Naive thymus-derived CD4-positive, alpha-beta T cell (primary cell): ENCODE measurements at regions of chr2 and their contacts with region 1.

Region 1: DNA sequence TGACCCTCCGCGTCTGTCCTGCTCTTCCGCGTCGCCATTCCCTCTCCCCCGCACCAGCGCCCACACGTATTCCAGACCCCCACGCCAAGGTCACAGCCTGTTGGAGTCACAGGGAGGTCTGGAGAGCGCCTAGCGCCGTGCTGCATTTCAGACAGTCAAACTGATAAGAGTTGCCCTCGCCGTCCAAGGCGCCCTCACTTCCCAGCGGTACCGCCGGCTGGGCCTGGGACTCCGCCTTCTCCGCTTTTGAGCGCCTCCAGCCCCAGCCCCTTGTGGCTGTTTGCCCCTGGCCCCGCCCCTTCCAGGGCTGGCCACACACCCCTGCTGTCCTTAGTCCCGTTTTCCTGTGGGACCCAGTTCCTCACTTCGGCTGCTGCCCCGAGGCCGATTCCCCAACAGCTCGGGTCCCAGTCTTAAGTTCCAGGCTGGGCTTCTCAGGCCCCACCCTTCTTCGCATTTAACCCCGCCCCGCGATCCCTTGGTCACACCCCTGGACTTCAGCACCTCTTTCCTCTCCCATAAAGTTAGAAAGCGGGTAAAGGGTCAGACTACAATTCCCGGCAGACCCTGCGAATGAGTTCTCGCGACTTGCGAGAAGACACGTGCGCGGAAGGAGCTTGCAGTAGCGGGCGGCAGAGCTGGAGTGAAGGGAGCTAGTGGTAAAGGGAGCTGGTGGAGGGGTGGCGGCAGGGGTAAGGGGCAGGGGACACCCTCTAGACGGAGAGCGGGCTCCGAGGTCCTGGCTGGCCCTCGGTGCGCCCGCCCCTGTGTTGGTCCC is at the start of gene GMPPA:
- DNase-seq: peak; percentile 78 to 95 (median 90)
- ATAC-seq: peak; percentile 94
- H3K4me3 ChIP-seq: peak within 1 kb of the TSS; percentile 85
- H3K4me3 Mint-ChIP-seq: peak within 1 kb of the TSS; percentile 91 to 99 (median 96)
- H3K27ac ChIP-seq: peak within 1 kb of the TSS; percentile 79
- H3K27ac Mint-ChIP-seq: peak within 1 kb of the TSS; percentile 76 to 97 (median 86)
- H3K4me1 ChIP-seq: peaks cover 19 to 22% of the 10 kb centered on the region in 2 donors
- H3K4me1 Mint-ChIP-seq: peaks cover 26 to 42% (median 36%) of the 10 kb centered on the region in 7 donors
- H3K27me3 ChIP-seq: peaks cover 4 to 9% of the 10 kb centered on the region in 2 donors
- H3K27me3 Mint-ChIP-seq: peaks cover 28 to 47% (median 40%) of the 10 kb centered on the region in 5 donors
- total RNA-seq, gene GMPPA: 22.4 to 58.3 (median 37.2) TPM

Region 2: GRCh38 chr2:217685255-217685605 is 1813.2 kb before region 1 on chr2:
- CTCF ChIA-PET with region 1: no interaction called
- POLR2A ChIA-PET with region 1: no interaction called
- intact Hi-C with region 1: no loop called
- DNase-seq: no peak
- ATAC-seq: no peak
- H3K4me3 ChIP-seq: no peak overlapping the region
- H3K4me3 Mint-ChIP-seq: no peak overlapping the region
- H3K27ac ChIP-seq: no peak overlapping the region
- H3K27ac Mint-ChIP-seq: no peak overlapping the region
- H3K4me1 ChIP-seq: no peaks in the 10 kb centered on the region
- H3K4me1 Mint-ChIP-seq: no peaks in the 10 kb centered on the region
- H3K27me3 ChIP-seq: no peaks in the 10 kb centered on the region
- H3K27me3 Mint-ChIP-seq: peaks cover 0 to 10% (median 0%) of the 10 kb centered on the region in 5 donors

Region 3: GRCh38 chr2:218568190-218569037 is 930.1 kb before region 1 on chr2 and contains the starts of genes CNOT9 and USP37:
- CTCF ChIA-PET with region 1: no interaction called
- POLR2A ChIA-PET with region 1: no interaction called
- intact Hi-C with region 1: loop called in 1 of 2 experiments (anchors 5 kb)
- DNase-seq: peak; percentile 99 to 100 (median 100)
- ATAC-seq: peak; percentile 95
- H3K4me3 ChIP-seq: peak within 1 kb of the TSS; percentile 78
- H3K4me3 Mint-ChIP-seq: peak within 1 kb of the TSS; percentile 90 to 100 (median 98)
- H3K27ac ChIP-seq: peak within 1 kb of the TSS; percentile 96
- H3K27ac Mint-ChIP-seq: peak within 1 kb of the TSS; percentile 97 to 100 (median 99)
- H3K4me1 ChIP-seq: peaks cover 22 to 31% of the 10 kb centered on the region in 2 donors
- H3K4me1 Mint-ChIP-seq: peaks cover 45 to 73% (median 64%) of the 10 kb centered on the region in 7 donors
- H3K27me3 ChIP-seq: no peaks in the 10 kb centered on the region
- H3K27me3 Mint-ChIP-seq: no peaks in the 10 kb centered on the region
- total RNA-seq, gene CNOT9: 44.7 to 99.6 (median 53.8) TPM
- total RNA-seq, gene USP37: 16.6 to 36.3 (median 28.1) TPM

Region 4: GRCh38 chr2:219206442-219207253 is 291.8 kb before region 1 on chr2 and contains the start of gene ZFAND2B:
- CTCF ChIA-PET with region 1: no interaction called
- POLR2A ChIA-PET with region 1: interaction called, 3 read pairs
- intact Hi-C with region 1: loop called (anchors 2 to 5 kb)
- DNase-seq: peak; percentile 92 to 98 (median 96)
- ATAC-seq: peak; percentile 96
- H3K4me3 ChIP-seq: peak within 1 kb of the TSS; percentile 98
- H3K4me3 Mint-ChIP-seq: peak within 1 kb of the TSS; percentile 77 to 98 (median 94)
- H3K27ac ChIP-seq: peak within 1 kb of the TSS; percentile 92
- H3K27ac Mint-ChIP-seq: peak within 1 kb of the TSS; percentile 96 to 99 (median 97)
- H3K4me1 ChIP-seq: peaks cover 20 to 28% of the 10 kb centered on the region in 2 donors
- H3K4me1 Mint-ChIP-seq: peaks cover 15 to 48% (median 43%) of the 10 kb centered on the region in 7 donors
- H3K27me3 ChIP-seq: no peaks in the 10 kb centered on the region
- H3K27me3 Mint-ChIP-seq: no peaks in the 10 kb centered on the region
- total RNA-seq, gene ZFAND2B: 50.1 to 79.5 (median 71.3) TPM

Region 5: GRCh38 chr2:219475697-219476651 is 22.5 kb before region 1 on chr2:
- CTCF ChIA-PET with region 1: no interaction called
- POLR2A ChIA-PET with region 1: no interaction called
- intact Hi-C with region 1: loop called in 1 of 2 experiments (anchors 2 kb)
- DNase-seq: peak in 7 of 9 donors; percentile 31 to 67 (median 44)
- ATAC-seq: peak; percentile 77
- H3K4me3 ChIP-seq: no peak overlapping the region
- H3K4me3 Mint-ChIP-seq: no peak overlapping the region
- H3K27ac ChIP-seq: no peak overlapping the region
- H3K27ac Mint-ChIP-seq: no peak overlapping the region
- H3K4me1 ChIP-seq: no peaks in the 10 kb centered on the region
- H3K4me1 Mint-ChIP-seq: peaks cover 4 to 5% (median 4%) of the 10 kb centered on the region in 7 donors
- H3K27me3 ChIP-seq: no peaks in the 10 kb centered on the region
- H3K27me3 Mint-ChIP-seq: peaks cover 0 to 4% (median 0%) of the 10 kb centered on the region in 5 donors

Region 6: DNA sequence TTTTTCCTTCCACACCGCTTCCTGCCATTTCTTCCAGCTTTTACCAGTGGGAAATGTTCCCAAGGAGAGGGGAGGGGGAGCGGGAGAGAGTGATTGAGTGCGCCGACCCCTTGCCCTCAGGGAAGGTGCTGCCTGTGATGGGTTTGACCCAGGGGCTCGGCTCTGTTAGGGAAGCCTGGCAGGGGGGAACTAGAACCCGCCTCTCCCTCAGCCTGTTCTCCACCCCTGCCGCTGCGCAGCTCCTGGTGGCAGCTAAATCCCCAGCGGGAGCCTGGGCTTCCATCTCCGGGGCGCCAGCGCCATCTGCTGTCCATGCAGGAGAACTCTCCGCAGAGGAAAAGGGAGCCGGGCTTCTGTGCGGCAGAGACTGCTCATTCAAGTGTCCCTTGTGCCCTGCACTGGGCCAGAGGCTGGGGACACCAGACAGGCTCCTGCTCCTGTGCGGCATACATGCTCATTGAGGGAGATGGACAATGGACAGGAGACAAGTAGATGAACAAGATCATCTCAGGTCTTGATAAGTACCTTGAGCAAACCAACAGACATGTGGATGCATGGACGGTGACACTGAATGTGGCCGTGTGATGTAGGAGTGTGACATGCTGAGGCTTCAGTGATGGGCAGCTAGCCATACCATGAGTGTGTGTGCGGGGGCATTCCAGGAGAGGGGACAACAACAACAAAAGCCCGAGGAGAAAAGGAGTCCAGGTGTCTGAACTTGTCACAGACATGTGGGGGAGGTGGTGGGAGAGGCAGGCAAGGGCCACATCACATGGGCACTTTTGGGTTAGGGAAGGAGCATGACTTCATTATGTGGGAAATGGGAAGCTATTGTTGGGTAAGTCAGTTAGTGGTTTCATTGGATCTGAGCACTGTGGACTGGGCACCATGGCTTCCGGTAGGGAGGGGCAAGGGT is 31.8 kb after region 1 on chr2:
- CTCF ChIA-PET with region 1: interaction called, 60 read pairs
- POLR2A ChIA-PET with region 1: interaction called, 8 read pairs
- intact Hi-C with region 1: loop called (anchors 1 kb)
- DNase-seq: peak; percentile 70 to 89 (median 83)
- ATAC-seq: peak; percentile 91
- H3K4me3 ChIP-seq: no peak overlapping the region
- H3K4me3 Mint-ChIP-seq: no peak overlapping the region
- H3K27ac ChIP-seq: no peak overlapping the region
- H3K27ac Mint-ChIP-seq: no peak overlapping the region
- H3K4me1 ChIP-seq: peaks cover 0 to 8% of the 10 kb centered on the region in 2 donors
- H3K4me1 Mint-ChIP-seq: peaks cover 0 to 7% (median 0%) of the 10 kb centered on the region in 7 donors
- H3K27me3 ChIP-seq: peaks cover 3 to 20% of the 10 kb centered on the region in 2 donors
- H3K27me3 Mint-ChIP-seq: peaks cover 53 to 65% (median 57%) of the 10 kb centered on the region in 5 donors

Region 7: DNA sequence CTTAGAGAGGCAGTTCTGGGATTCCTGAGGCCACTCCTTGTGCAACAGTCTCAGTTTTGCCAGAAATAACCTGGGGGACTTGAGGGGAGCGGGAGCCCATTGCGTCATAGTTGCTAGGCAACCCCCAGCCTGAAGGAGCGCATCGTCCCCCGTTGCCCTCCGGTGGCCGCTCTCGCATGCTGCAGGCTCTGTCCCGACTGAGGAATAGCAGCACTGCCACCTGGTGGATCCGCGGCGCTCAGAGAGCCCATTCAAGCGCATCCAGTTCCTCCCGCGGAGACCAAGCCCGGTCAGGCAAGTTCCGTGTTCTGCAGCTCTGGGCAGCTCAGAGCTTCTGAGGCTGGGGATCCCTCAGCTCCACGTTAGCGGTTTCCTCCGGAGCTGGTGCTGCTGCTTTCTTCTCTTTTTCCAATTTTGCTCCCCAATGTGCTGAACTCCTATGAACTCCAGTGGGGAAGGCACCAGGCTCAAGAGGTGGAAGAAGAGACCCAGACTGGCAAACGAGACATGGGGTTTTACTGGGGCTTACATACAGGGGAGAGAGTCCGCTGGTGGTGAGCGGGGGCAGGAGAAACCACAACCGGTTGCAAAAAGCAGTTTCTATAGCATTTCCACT is 144.1 kb after region 1 on chr2:
- CTCF ChIA-PET with region 1: no interaction called
- POLR2A ChIA-PET with region 1: interaction called, 3 read pairs
- intact Hi-C with region 1: loop called (anchors 1 to 2 kb)
- DNase-seq: peak; percentile 73 to 88 (median 83)
- ATAC-seq: peak; percentile 99
- H3K4me3 ChIP-seq: no peak overlapping the region
- H3K4me3 Mint-ChIP-seq: peak overlapping the region in 1 of 10 donors; percentile 29
- H3K27ac ChIP-seq: no peak overlapping the region
- H3K27ac Mint-ChIP-seq: peak overlapping the region in 3 of 9 donors; percentile 16 to 69 (median 20)
- H3K4me1 ChIP-seq: peaks cover 3 to 4% of the 10 kb centered on the region in 2 donors
- H3K4me1 Mint-ChIP-seq: peaks cover 0 to 15% (median 0%) of the 10 kb centered on the region in 7 donors
- H3K27me3 ChIP-seq: no peaks in the 10 kb centered on the region
- H3K27me3 Mint-ChIP-seq: peaks cover 3 to 29% (median 12%) of the 10 kb centered on the region in 5 donors

Region 8: DNA sequence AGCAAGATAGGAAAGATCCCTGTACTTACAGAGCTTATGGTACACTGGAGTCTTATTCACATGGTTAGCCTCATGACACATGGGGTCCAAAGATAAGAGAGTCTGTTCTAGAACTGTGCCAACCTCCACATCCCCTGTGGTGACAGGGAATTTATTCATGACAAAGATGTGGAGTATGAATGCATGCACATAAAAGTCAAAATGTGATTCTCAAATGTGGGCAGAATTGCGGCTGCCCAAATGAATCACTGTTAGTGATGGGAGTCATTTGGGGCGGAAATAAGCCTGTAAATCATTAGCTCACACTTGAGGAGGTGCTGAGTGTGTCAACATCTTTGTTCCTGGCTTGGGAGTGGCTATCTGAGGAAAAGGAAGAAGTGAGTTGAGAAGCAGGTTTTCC is 689.6 kb after region 1 on chr2:
- CTCF ChIA-PET with region 1: no interaction called
- POLR2A ChIA-PET with region 1: no interaction called
- intact Hi-C with region 1: no loop called
- DNase-seq: no peak
- ATAC-seq: no peak
- H3K4me3 ChIP-seq: no peak overlapping the region
- H3K4me3 Mint-ChIP-seq: no peak overlapping the region
- H3K27ac ChIP-seq: no peak overlapping the region
- H3K27ac Mint-ChIP-seq: no peak overlapping the region
- H3K4me1 ChIP-seq: no peaks in the 10 kb centered on the region
- H3K4me1 Mint-ChIP-seq: no peaks in the 10 kb centered on the region
- H3K27me3 ChIP-seq: no peaks in the 10 kb centered on the region
- H3K27me3 Mint-ChIP-seq: peaks cover 0 to 4% (median 0%) of the 10 kb centered on the region in 5 donors